ENCODE measurements at regions of chr20 and their contacts with region 1.

Region 1: DNA sequence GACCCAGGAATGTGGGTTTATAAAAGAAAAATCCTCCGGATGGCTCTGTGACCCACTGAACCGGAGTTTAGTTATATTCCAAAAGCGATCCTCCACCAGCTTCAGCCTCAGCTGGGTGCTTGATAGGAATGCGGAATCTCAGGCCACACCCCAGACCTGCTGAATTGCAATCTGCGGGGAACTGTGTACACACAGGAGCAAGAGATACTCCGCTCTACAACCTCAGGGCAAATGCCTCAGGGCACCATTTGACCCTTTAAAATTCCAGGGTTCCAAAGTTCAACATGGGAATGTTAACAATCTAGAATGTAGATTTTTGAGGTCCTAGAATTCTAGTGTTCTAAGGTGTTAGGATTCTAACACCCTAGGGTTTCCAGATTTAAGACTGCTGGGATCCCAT is 10.8 kb downstream of the BPIFA2 start:
- DNase-seq: no peak
- ATAC-seq: no peak
- H3K4me3 ChIP-seq: no peak overlapping the region
- H3K27ac ChIP-seq: no peak overlapping the region
- H3K4me1 ChIP-seq: no peaks in the 10 kb centered on the region
- H3K27me3 ChIP-seq: peaks cover 0 to 2% of the 10 kb centered on the region in 2 experiments; a peak in 1 of 4 replicates
- CTCF ChIP-seq: no peak
- EP300 ChIP-seq: no peak
- POLR2A ChIP-seq: no peak
- RAD21 ChIP-seq: no peak

Region 2: DNA sequence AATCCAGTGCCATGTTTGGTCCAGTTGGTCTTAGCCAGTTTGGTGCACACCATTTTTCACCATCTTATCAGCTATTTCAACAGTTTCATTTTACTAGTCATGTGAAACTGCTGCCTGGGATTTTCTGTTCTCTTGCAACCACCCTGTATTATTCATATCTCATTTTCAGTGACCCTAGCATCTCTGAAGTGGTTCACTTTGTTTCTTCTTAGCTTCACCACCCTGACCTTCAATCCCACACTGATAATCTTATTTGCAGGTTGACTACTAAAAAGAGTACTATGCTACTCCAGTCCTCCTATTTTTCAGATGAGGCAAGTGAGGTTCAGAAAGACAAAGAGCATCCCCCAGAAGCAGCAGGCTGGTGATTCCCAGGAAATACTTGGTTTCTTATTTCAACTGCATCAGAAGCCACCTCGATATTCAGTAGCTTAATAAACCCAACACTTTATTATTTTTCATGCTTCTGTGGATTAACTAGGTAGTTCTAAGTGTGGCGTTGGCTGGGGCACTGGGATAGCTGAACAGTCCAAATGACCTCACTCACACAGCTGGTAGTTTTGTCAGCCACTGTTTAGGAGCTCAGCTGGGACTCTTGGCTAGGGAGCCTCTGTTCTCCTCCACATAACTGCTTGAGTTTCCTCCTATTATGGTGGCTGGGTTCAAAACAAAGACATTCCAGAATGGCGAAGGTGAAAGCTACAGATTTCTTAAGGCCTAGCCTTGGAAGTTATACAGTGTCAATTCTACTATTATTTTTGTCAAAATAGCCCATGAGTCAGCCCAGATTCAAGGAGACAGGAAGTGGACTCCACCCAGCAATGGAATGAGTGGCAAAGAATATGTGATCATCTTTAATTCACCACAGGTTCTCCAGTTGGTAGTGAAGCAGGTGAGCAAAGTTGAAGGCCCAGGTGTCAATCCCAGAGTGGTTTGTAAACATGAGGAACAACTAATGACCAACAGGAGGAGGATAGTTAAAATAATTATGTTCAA is 58.7 kb before region 1 on chr20:
- CTCF ChIA-PET with region 1: no interaction called
- POLR2A ChIA-PET with region 1: no interaction called
- RAD21 ChIA-PET with region 1: no interaction called
- SMC1A ChIA-PET with region 1: no interaction called
- in situ Hi-C with region 1: no loop called
- intact Hi-C with region 1: loop called (anchors 10 kb)
- DNase-seq: peak; percentile 67
- ATAC-seq: peak; percentile 95
- H3K4me3 ChIP-seq: no peak overlapping the region
- H3K27ac ChIP-seq: peak overlapping the region; percentile 56
- H3K4me1 ChIP-seq: peaks cover 17% of the 10 kb centered on the region
- H3K27me3 ChIP-seq: no peaks in the 10 kb centered on the region
- CTCF ChIP-seq: no peak
- EP300 ChIP-seq: 0 out of 4 replicates have a peak, but pooled peaks of 1 of the 2 experiments have one; percentile 29
- POLR2A ChIP-seq: no peak
- RAD21 ChIP-seq: no peak

Measured in GM12878 (cell line).